ENCODE measurements at regions of chr14 and their contacts with region 1.

Region 1: GRCh38 chr14:100263144-100263543 is 24.2 kb downstream of the YY1 start:
- DNase-seq: no peak
- CTCF ChIP-seq: no peak

Region 2: GRCh38 chr14:100246826-100247428 is 16.2 kb before region 1 on chr14:
- CTCF ChIA-PET with region 1: interaction called, 27 read pairs
- POLR2A ChIA-PET with region 1: interaction called, 3 read pairs
- DNase-seq: no peak
- CTCF ChIP-seq: peak; percentile 29

Measured in GM10248 (cell line).